ENCODE measurements at regions of chr15 and their contacts with region 1.

Region 1: DNA sequence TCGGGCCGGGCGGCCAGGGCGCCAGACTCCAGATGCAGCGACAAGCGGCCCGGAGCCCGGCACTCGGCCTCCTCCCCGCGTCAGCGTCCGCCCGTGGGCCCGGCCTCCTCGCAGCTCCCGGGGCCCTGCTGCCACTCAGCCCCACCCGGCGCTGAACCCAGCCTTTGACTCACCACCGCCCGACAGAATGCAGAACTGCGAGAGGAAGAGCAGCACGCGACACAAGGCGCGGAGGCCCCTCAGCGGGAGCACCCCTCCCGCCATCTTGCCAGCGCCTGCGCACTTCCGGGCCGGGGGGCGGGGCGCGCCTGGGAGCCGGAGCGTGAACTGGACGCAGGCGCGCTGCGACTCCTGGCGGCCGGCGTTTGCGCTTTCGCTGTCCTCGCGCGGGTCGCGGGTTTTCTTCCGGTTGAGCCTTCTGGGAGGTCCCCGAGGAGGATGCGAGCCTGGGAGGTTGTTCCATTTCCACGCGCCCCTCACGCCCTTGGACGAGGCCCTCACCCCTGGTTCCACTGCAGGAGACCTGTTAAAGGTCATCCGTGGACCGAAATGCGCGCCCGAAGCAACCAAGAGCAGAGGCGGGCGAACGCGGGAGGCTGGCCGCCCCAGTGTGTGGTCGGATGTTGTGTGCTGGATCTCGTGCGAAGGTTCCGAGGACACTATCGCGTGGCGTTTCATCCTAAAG is at the start of gene TM2D3:
- DNase-seq: peak; percentile 91 to 99 (median 96)
- ATAC-seq: peak; percentile 90 to 92
- H3K4me3 Mint-ChIP-seq: peak within 1 kb of the TSS; percentile 77 to 96 (median 92)
- H3K27ac Mint-ChIP-seq: peak within 1 kb of the TSS; percentile 91 to 98 (median 97)
- H3K4me1 Mint-ChIP-seq: peaks cover 9 to 48% (median 31%) of the 10 kb centered on the region in 4 donors
- H3K27me3 Mint-ChIP-seq: no peaks in the 10 kb centered on the region
- polyA plus RNA-seq, gene TM2D3: 28.1 to 32.3 (median 31.0) TPM

Region 2: GRCh38 chr15:101723874-101724674 is 71.8 kb after region 1 on chr15 and contains the start of gene TARS3:
- POLR2A ChIA-PET with region 1: interaction called, 18 read pairs
- DNase-seq: peak; percentile 87 to 99 (median 92)
- ATAC-seq: peak; percentile 88 to 93
- H3K4me3 Mint-ChIP-seq: peak within 1 kb of the TSS; percentile 77 to 97 (median 92)
- H3K27ac Mint-ChIP-seq: peak within 1 kb of the TSS; percentile 81 to 96 (median 92)
- H3K4me1 Mint-ChIP-seq: peaks cover 10 to 46% (median 36%) of the 10 kb centered on the region in 4 donors
- H3K27me3 Mint-ChIP-seq: no peaks in the 10 kb centered on the region
- polyA plus RNA-seq, gene TARS3: 7.2 to 15.2 (median 11.9) TPM